Panc1 (cell line): ENCODE measurements at regions of chr17 and their contacts with region 1.

Region 1: GRCh38 chr17:39872751-39873150 is 4.7 kb downstream of the ZPBP2 start:
- DNase-seq: no peak
- ATAC-seq: no peak
- H3K4me3 ChIP-seq: no peak overlapping the region
- H3K27ac ChIP-seq: no peak overlapping the region
- H3K4me1 ChIP-seq: no peaks in the 10 kb centered on the region
- H3K27me3 ChIP-seq: peaks cover 7% of the 10 kb centered on the region; the same call in 1 of the 2 replicates
- CTCF ChIP-seq: no peak; the same call in 1 of the 2 replicates

Region 2: GRCh38 chr17:39835038-39835786 is 37.5 kb before region 1 on chr17:
- CTCF ChIA-PET with region 1: no interaction called
- POLR2A ChIA-PET with region 1: interaction called, 12 read pairs
- in situ Hi-C with region 1: no loop called
- intact Hi-C with region 1: no loop called
- DNase-seq: no peak
- ATAC-seq: no peak
- H3K4me3 ChIP-seq: no peak overlapping the region
- H3K27ac ChIP-seq: no peak overlapping the region
- H3K4me1 ChIP-seq: no peaks in the 10 kb centered on the region
- H3K27me3 ChIP-seq: no peaks in the 10 kb centered on the region; the same call in 1 of the 2 replicates
- CTCF ChIP-seq: no peak

Region 3: GRCh38 chr17:39980351-39981206 is 107.8 kb after region 1 on chr17 and contains the start of gene PSMD3:
- CTCF ChIA-PET with region 1: interaction called, 3 read pairs
- POLR2A ChIA-PET with region 1: no interaction called
- in situ Hi-C with region 1: no loop called
- intact Hi-C with region 1: loop called (anchors 10 kb)
- DNase-seq: peak; percentile 98
- ATAC-seq: peak; percentile 96
- H3K4me3 ChIP-seq: peak within 1 kb of the TSS; percentile 90 to 95
- H3K27ac ChIP-seq: peak within 1 kb of the TSS; percentile 89
- H3K4me1 ChIP-seq: peaks cover 11% of the 10 kb centered on the region; the same call in 1 of the 2 replicates
- H3K27me3 ChIP-seq: peaks cover 9% of the 10 kb centered on the region
- CTCF ChIP-seq: peak; percentile 87
- total RNA-seq, gene PSMD3: 175 TPM